Heart right ventricle (tissue), 16 donors: ENCODE measurements at regions of chr1 and their contacts with region 1.

Region 1: DNA sequence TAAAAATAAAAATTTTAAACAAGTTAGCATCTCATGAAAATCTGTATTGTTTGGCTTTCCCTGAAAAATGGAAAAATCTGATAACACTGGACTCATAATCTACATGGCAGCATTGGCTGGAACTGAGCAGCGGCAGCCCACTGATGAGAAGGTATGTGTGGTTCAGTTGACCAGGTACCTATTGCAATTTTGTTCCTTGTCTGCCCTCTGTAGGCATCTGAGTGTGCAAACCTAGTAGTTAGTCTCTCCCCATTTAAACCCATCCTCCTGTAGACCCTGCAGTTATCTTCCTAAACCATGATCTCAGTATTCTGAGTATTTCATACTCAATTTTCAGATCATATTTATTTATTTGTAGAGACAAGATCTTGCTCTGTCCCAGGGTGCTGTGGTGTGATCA is 59.4 kb upstream of the SERBP1 start:
- DNase-seq: peak in 1 of 2 donors; percentile 11
- ATAC-seq: peak; percentile 46 to 91 (median 78)
- H3K4me3 ChIP-seq: no peak overlapping the region
- H3K27ac ChIP-seq: no peak overlapping the region
- H3K4me1 ChIP-seq: no peaks in the 10 kb centered on the region
- H3K27me3 ChIP-seq: no peaks in the 10 kb centered on the region
- CTCF ChIP-seq: peak; percentile 17 to 67 (median 50)

Region 2: GRCh38 chr1:67230539-67230938 is 259.1 kb before region 1 on chr1:
- intact Hi-C with region 1: loop called in 1 of 10 experiments (anchors 10 kb)
- DNase-seq: no peak
- ATAC-seq: no peak
- H3K4me3 ChIP-seq: no peak overlapping the region
- H3K27ac ChIP-seq: no peak overlapping the region
- H3K4me1 ChIP-seq: no peaks in the 10 kb centered on the region
- H3K27me3 ChIP-seq: peaks cover 0 to 6% (median 0%) of the 10 kb centered on the region in 7 donors
- CTCF ChIP-seq: no peak

Region 3: GRCh38 chr1:67347688-67348472 is 141.8 kb before region 1 on chr1:
- intact Hi-C with region 1: loop called in 8 of 10 experiments (anchors 1 to 5 kb)
- DNase-seq: peak; percentile 20 to 46
- ATAC-seq: peak in 7 of 8 donors; percentile 76 to 89 (median 82)
- H3K4me3 ChIP-seq: no peak overlapping the region
- H3K27ac ChIP-seq: no peak overlapping the region
- H3K4me1 ChIP-seq: peaks cover 0 to 4% (median 0%) of the 10 kb centered on the region in 9 donors
- H3K27me3 ChIP-seq: no peaks in the 10 kb centered on the region
- CTCF ChIP-seq: peak; percentile 46 to 84 (median 76)

Region 4: GRCh38 chr1:67430352-67431155 is 59.1 kb before region 1 on chr1 and contains the start of gene SERBP1:
- intact Hi-C with region 1: loop called in 2 of 10 experiments (anchors 2 to 10 kb)
- DNase-seq: peak; percentile 95 to 96
- ATAC-seq: peak; percentile 98 to 99 (median 98)
- H3K4me3 ChIP-seq: peak within 1 kb of the TSS; percentile 67 to 88 (median 85)
- H3K27ac ChIP-seq: peak within 1 kb of the TSS; percentile 60 to 94 (median 90)
- H3K4me1 ChIP-seq: peaks cover 0 to 65% (median 37%) of the 10 kb centered on the region in 9 donors
- H3K27me3 ChIP-seq: no peaks in the 10 kb centered on the region
- CTCF ChIP-seq: no peak
- total RNA-seq, gene SERBP1: 121 to 153 (median 142) TPM